Activated B cell treated with CpG ODN at 0.5 μM for 24 hours (primary cell): ENCODE measurements at regions of chr7 and their contacts with region 1.

Region 1: DNA sequence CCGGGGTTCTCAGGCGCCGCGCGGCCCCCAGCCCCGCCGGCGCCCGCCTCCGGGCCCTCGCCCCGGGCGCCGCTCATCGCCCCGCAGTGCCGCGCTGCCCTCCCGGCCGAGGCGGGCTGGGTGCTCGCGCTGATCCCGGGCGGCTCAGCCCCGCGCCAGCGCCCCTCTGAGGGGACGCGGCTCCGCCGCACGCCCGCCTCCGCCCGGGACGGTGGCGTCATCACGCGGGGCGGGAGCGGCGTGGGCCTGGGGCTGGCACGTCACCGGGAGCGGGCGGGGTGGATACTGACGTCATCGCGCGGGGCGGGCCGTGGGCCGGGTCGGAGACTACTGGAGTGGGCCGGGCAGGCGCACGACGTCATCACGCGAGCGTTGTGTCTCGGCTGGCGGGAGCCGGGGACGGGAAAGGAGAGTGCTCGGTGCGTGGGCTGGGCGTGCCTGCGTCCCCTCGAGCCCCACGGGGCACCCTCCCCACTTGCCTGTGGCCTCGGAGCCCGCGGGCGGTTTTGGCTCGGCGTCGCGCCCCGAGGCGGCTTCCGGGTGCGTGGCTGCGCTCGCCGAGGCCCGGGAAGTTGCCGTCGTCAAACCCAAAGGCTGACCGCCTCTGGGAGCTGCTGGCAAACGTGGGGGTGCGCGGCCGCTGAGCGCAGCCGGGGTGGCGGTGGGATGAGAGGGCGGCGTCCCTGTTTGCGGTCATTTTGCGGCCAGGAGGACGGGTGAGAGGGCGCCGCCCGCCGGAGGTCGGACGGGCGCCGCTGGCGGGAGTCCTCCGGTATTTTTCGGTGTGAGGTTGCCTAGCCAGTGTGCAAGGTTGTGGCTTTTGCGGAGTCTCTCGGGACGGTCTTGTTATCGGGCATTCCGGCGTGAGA is at the start of gene ESYT2:
- DNase-seq: peak; percentile 100
- ATAC-seq: peak; percentile 81
- H3K4me3 Mint-ChIP-seq: peak within 1 kb of the TSS; percentile 88
- H3K27ac Mint-ChIP-seq: peak within 1 kb of the TSS; percentile 92
- H3K4me1 Mint-ChIP-seq: peaks cover 24% of the 10 kb centered on the region
- H3K27me3 Mint-ChIP-seq: no peaks in the 10 kb centered on the region
- CTCF ChIP-seq: no peak
- total RNA-seq, gene ESYT2: 20.3 and 21.3 TPM in 2 replicates

Region 2: GRCh38 chr7:158043551-158044481 is 785.8 kb before region 1 on chr7:
- CTCF ChIA-PET with region 1: no interaction called
- POLR2A ChIA-PET with region 1: no interaction called
- intact Hi-C with region 1: no loop called
- DNase-seq: no peak
- ATAC-seq: no peak
- H3K4me3 Mint-ChIP-seq: no peak overlapping the region
- H3K27ac Mint-ChIP-seq: no peak overlapping the region
- H3K4me1 Mint-ChIP-seq: no peaks in the 10 kb centered on the region
- H3K27me3 Mint-ChIP-seq: no peaks in the 10 kb centered on the region
- CTCF ChIP-seq: no peak

Region 3: DNA sequence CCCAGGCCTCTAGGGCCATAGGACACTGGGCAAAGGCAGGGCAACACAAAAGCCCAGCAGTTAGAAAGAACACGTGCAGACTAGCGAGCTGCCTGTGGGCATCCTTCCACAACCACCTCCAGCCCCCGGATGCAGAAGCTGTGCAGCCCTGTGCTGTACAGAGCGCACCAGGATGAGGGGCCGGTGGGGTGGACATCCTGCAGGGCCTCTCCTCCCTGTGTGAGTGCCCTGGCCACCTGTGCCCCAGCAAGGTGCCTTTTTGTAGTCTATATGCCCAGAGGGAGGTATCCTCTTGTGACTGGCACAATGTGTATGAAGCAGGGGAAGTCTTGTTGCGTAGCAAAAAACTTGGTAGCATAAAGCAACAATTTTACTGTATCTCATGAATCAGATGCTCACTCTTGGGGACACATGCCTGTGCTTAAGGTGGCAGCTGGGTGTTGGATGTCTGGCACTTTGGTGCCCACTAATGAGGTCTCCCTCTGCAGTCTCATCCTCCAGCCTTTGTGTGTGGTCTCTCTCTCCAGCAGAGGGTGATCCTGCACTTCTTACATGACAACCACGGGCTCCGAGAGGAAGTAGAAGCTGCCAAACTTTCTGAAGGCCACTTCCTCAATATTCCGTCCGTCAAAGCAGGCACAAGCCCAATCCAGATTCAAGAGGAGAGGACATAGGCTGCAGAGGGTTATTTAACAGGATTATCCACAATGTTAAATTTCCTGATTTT is 133.7 kb before region 1 on chr7:
- CTCF ChIA-PET with region 1: no interaction called
- POLR2A ChIA-PET with region 1: no interaction called
- intact Hi-C with region 1: loop called (anchors 2 kb)
- DNase-seq: no peak
- ATAC-seq: peak; percentile 94
- H3K4me3 Mint-ChIP-seq: peak overlapping the region; percentile 35
- H3K27ac Mint-ChIP-seq: peak overlapping the region; percentile 52
- H3K4me1 Mint-ChIP-seq: peaks cover 9% of the 10 kb centered on the region
- H3K27me3 Mint-ChIP-seq: no peaks in the 10 kb centered on the region
- CTCF ChIP-seq: no peak

Region 4: GRCh38 chr7:158704704-158705468 is 124.7 kb before region 1 on chr7 and contains the start of gene NCAPG2:
- CTCF ChIA-PET with region 1: no interaction called
- POLR2A ChIA-PET with region 1: interaction called, 24 read pairs
- intact Hi-C with region 1: loop called (anchors 1 kb)
- DNase-seq: peak; percentile 97
- ATAC-seq: peak; percentile 98
- H3K4me3 Mint-ChIP-seq: peak within 1 kb of the TSS; percentile 90
- H3K27ac Mint-ChIP-seq: peak within 1 kb of the TSS; percentile 69
- H3K4me1 Mint-ChIP-seq: peaks cover 13% of the 10 kb centered on the region
- H3K27me3 Mint-ChIP-seq: no peaks in the 10 kb centered on the region
- CTCF ChIP-seq: no peak
- total RNA-seq, gene NCAPG2: 8.2 and 11.0 TPM in 2 replicates

Region 5: GRCh38 chr7:158789842-158790241 is 39.7 kb before region 1 on chr7:
- CTCF ChIA-PET with region 1: no interaction called
- POLR2A ChIA-PET with region 1: no interaction called
- intact Hi-C with region 1: loop called (anchors 5 kb)
- DNase-seq: no peak
- ATAC-seq: no peak
- H3K4me3 Mint-ChIP-seq: no peak overlapping the region
- H3K27ac Mint-ChIP-seq: no peak overlapping the region
- H3K4me1 Mint-ChIP-seq: no peaks in the 10 kb centered on the region
- H3K27me3 Mint-ChIP-seq: no peaks in the 10 kb centered on the region
- CTCF ChIP-seq: no peak

Region 6: DNA sequence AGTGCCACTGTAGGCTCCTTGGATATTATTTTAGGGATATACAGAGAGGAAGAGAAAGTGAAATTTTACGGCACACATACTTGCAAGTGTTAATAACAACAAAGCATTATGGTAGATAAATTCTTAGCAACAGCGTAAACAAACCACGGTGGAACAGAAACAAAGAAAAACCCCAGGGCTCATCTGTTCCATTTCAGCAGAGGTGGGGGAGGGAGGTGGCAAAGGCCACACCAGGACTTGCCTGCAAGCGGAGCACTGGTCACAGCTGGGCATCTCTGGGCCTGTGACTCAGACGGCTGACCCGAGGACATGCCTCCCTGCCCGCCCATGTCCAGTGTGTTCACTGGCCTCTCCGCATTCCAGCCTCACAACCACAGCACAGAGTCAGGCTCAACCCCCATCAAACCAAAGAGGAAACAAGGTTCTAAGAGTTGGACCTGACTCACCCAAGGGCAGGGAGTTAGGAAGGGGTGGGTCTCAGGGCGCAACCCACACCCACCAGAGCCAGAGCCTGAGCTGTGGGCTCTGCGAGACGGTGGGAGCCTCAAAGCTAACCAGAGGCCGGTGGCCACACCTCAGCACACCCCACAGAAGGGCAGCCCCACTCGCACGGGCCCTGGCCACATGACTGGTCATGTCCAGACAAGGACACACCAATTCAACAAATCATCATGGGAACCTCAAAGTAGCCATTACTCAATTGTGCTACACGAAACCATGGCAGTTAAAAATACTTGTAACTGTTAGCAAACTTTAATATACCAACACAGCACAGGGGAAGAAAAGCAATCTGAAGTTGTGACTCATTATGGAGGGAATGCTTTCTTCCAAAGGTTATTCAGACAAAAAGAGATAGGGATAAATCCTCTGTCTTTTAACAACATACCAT is 11.0 kb before region 1 on chr7:
- CTCF ChIA-PET with region 1: no interaction called
- POLR2A ChIA-PET with region 1: interaction called, 5 read pairs
- intact Hi-C with region 1: loop called (anchors 1 kb)
- DNase-seq: peak; percentile 32
- ATAC-seq: peak; percentile 79
- H3K4me3 Mint-ChIP-seq: peak overlapping the region; percentile 56
- H3K27ac Mint-ChIP-seq: peak overlapping the region; percentile 78
- H3K4me1 Mint-ChIP-seq: peaks cover 57% of the 10 kb centered on the region
- H3K27me3 Mint-ChIP-seq: no peaks in the 10 kb centered on the region
- CTCF ChIP-seq: no peak

Region 7: DNA sequence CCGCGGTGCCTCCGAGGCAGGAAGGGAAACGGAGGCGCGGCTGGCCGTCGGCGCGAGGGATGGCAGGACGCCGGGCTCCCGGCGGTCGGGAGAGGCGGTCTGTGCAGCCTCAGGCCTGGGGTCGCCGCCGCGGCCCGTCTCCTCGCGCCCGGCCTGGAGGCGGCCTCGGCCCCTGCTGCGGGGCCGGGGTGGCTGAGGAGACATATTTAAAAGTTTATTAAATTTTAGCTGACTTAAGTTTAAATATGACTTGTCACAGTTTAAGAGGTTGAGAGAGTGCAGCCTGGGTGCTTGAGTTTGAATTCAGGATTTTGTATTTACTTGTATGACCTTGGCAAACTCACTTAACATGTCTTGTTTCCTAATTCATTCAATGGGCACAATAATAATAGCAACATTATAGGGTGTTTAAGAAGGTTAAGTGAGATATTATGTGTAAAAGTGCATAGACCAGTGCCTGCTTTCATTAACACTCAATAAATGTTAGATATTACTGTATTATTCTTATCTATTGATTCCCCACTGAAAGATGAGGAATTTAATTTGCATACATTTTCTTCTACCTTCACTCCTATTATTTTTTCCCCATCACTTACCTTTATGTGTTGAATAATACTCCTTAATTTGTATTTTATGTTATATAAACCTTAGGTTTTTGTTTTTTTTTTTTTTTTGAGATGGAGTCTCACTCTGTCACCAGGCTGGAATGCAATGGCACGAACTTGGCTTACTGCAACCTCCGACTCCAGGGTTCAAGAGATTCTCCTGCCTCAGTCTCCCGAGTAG is 27.5 kb after region 1 on chr7:
- CTCF ChIA-PET with region 1: no interaction called
- POLR2A ChIA-PET with region 1: interaction called, 18 read pairs
- intact Hi-C with region 1: loop called (anchors 1 kb)
- DNase-seq: no peak
- ATAC-seq: peak; percentile 9
- H3K4me3 Mint-ChIP-seq: peak overlapping the region; percentile 98
- H3K27ac Mint-ChIP-seq: no peak overlapping the region
- H3K4me1 Mint-ChIP-seq: peaks cover 12% of the 10 kb centered on the region
- H3K27me3 Mint-ChIP-seq: no peaks in the 10 kb centered on the region
- CTCF ChIP-seq: no peak

Region 8: DNA sequence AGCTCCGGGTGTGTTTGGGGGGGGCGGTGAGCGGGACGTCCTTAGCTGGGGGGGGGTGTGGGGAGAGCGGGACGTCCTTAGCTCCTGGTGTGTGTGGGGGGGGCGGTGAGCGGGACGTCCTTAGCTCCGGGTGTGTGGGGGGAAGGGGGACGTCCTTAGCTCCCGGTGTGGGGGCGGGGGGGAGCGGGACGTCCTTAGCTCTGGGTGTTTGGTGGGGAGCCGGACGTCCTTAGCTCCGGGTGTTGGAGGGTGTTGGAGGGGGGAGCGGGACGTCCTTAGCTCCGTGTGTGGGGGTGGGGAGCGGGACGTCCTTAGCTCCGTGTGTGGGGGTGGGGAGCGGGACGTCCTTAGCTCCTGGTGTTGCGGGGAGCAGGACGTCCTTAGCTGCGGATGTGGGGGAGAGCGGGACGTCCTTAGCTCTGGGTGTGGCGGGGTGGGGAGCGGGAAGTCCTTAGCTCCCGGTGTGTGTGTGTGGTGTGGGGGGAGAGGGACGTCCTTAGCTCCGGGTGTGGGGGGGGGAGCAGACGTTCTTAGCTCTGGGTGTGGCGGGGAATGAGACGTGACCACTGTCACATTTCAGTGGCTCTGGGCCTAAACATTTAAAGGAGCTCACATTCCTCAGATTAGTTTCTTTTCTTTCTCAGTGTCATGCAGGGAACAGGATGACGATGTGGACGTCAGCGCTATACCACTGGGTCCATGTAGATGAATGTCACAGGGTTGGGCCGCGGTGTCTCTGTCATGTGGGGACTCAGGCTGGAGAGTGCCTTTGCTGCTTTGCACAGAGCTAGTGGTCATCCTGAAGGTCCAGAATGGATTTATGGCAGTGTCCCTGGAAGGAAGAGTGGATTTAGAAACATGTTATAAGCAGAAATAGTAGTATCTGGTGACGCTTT is 34.3 kb after region 1 on chr7:
- CTCF ChIA-PET with region 1: no interaction called
- POLR2A ChIA-PET with region 1: interaction called, 12 read pairs
- intact Hi-C with region 1: no loop called
- DNase-seq: no peak
- ATAC-seq: peak; percentile 62
- H3K4me3 Mint-ChIP-seq: peak overlapping the region; percentile 88
- H3K27ac Mint-ChIP-seq: peak overlapping the region; percentile 9
- H3K4me1 Mint-ChIP-seq: peaks cover 18% of the 10 kb centered on the region
- H3K27me3 Mint-ChIP-seq: no peaks in the 10 kb centered on the region
- CTCF ChIP-seq: no peak

Region 9: DNA sequence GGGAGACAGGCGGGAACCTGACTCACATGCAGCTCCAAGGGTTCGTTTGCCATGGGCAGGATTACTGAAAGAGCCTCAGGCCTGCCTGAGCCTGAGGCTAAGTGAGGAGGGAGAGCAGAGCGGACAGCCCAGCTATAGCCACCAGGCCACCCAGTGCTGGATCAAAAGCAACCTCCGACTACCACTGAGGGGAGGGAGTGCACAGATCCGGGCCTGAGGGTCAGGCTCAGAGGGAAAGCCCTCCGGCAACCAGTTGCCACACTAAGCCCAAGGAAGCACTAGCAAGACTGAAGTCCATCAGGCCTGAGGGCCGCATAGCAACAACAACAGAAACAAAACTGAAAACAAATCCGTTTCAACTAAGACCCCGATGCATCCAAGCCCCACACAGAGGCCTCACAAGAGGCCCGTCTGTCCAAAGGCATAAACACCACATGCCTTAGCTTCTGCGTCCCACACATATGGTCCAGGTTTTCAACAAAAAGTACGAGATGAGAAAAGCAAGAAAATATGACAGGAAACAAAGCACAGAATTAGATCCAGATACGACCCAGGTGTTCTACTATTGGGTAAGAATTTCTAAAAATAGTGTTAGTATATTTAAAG is 407.6 kb after region 1 on chr7:
- CTCF ChIA-PET with region 1: no interaction called
- POLR2A ChIA-PET with region 1: no interaction called
- intact Hi-C with region 1: no loop called
- DNase-seq: no peak
- ATAC-seq: no peak
- H3K4me3 Mint-ChIP-seq: no peak overlapping the region
- H3K27ac Mint-ChIP-seq: no peak overlapping the region
- H3K4me1 Mint-ChIP-seq: no peaks in the 10 kb centered on the region
- H3K27me3 Mint-ChIP-seq: peaks cover 2% of the 10 kb centered on the region
- CTCF ChIP-seq: no peak